ENCODE measurements at regions of chr2 and their contacts with region 1.

Region 1: GRCh38 chr2:227766373-227766883 is 20.7 kb downstream of the SCYGR8 start:
- DNase-seq: peak; percentile 78 to 82
- H3K4me3 ChIP-seq: no peak overlapping the region
- H3K4me3 Mint-ChIP-seq: no peak overlapping the region
- H3K27ac Mint-ChIP-seq: peak overlapping the region; percentile 3
- H3K4me1 ChIP-seq: peaks cover 25% of the 10 kb centered on the region
- H3K4me1 Mint-ChIP-seq: peaks cover 23% of the 10 kb centered on the region
- H3K27me3 ChIP-seq: no peaks in the 10 kb centered on the region
- H3K27me3 Mint-ChIP-seq: no peaks in the 10 kb centered on the region
- CTCF ChIP-seq: peak; percentile 76 to 81

Region 2: DNA sequence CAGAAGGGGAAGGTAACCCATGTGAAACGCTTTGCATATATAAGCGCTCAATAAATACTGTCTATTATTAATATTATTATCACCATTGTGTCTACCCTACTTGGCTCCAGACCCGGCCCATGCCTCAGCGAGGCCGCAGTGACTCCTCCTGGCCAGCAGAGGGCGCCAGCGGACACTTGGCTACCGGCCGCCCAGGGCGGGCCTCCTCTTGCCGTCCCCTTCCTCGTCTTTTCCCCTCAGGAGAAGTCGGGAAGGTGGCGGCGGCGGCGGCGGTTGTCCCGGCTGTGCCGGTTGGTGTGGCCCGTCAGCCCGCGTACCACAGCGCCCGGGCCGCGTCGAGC is 294.5 kb before region 1 on chr2 and contains the start of gene AGFG1:
- CTCF ChIA-PET with region 1: interaction called, 3 read pairs
- POLR2A ChIA-PET with region 1: no interaction called
- intact Hi-C with region 1: loop called (anchors 5 kb)
- DNase-seq: peak; percentile 80 to 89
- H3K4me3 ChIP-seq: peak within 1 kb of the TSS; percentile 79
- H3K4me3 Mint-ChIP-seq: peak within 1 kb of the TSS; percentile 93
- H3K27ac Mint-ChIP-seq: peak within 1 kb of the TSS; percentile 22
- H3K4me1 ChIP-seq: peaks cover 29% of the 10 kb centered on the region
- H3K4me1 Mint-ChIP-seq: peaks cover 12% of the 10 kb centered on the region
- H3K27me3 ChIP-seq: no peaks in the 10 kb centered on the region
- H3K27me3 Mint-ChIP-seq: no peaks in the 10 kb centered on the region
- CTCF ChIP-seq: peak; percentile 88 to 89
- total RNA-seq, gene AGFG1: 73.1 and 73.2 TPM in 2 replicates

Region 3: DNA sequence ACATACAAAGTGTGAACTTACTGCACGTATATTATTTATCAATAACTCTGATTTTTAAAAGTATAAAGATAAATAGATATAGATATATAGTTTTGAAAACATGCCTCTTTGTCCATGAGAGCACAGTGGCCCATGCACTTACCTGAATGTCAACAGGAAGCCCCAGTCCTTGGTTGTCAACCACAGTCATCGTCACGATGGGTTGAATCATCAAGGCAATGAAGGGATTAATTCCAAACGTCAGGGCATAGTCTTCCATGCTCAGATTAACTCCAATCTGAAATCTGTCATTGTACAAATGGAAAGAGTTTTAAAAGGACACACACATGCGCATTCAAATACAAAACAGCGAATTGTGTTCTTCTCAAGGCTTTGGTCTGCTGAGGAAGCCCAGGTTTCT is 133.6 kb before region 1 on chr2:
- CTCF ChIA-PET with region 1: no interaction called
- POLR2A ChIA-PET with region 1: no interaction called
- intact Hi-C with region 1: no loop called
- DNase-seq: no peak
- H3K4me3 ChIP-seq: no peak overlapping the region
- H3K4me3 Mint-ChIP-seq: no peak overlapping the region
- H3K27ac Mint-ChIP-seq: no peak overlapping the region
- H3K4me1 ChIP-seq: peaks cover 5% of the 10 kb centered on the region
- H3K4me1 Mint-ChIP-seq: no peaks in the 10 kb centered on the region
- H3K27me3 ChIP-seq: no peaks in the 10 kb centered on the region
- H3K27me3 Mint-ChIP-seq: no peaks in the 10 kb centered on the region
- CTCF ChIP-seq: no peak

Region 4: DNA sequence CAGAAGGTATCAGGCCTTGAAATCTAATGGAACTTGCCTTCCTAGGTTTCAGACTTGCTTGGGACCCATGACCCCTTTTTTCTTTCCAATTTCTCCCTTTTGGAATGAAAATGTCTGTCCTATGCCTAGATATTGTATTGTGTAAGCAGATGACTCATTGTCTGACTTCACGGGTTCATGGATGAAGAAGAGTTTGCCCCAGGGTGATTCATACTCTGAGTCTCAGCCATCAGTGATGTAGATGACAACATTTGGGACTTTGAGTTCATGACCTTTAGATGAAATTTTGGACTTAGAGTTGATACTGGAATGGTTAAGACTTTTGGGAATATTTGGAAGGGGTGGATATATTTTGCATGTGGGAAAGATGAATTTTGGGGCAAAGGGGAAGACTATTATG is 111.0 kb before region 1 on chr2:
- CTCF ChIA-PET with region 1: interaction called, 48 read pairs
- POLR2A ChIA-PET with region 1: interaction called, 6 read pairs
- intact Hi-C with region 1: loop called (anchors 1 kb)
- DNase-seq: no peak
- H3K4me3 ChIP-seq: no peak overlapping the region
- H3K4me3 Mint-ChIP-seq: no peak overlapping the region
- H3K27ac Mint-ChIP-seq: peak overlapping the region; percentile 37
- H3K4me1 ChIP-seq: peaks cover 11% of the 10 kb centered on the region
- H3K4me1 Mint-ChIP-seq: peaks cover 12% of the 10 kb centered on the region
- H3K27me3 ChIP-seq: no peaks in the 10 kb centered on the region
- H3K27me3 Mint-ChIP-seq: no peaks in the 10 kb centered on the region
- CTCF ChIP-seq: no peak

Region 5: GRCh38 chr2:227717687-227718567 is 48.5 kb before region 1 on chr2 and contains the start of gene SLC19A3:
- CTCF ChIA-PET with region 1: interaction called, 6 read pairs
- POLR2A ChIA-PET with region 1: interaction called, 4 read pairs
- intact Hi-C with region 1: loop called (anchors 1 kb)
- DNase-seq: peak; percentile 87 to 90
- H3K4me3 ChIP-seq: peak within 1 kb of the TSS; percentile 43
- H3K4me3 Mint-ChIP-seq: peak within 1 kb of the TSS; percentile 74
- H3K27ac Mint-ChIP-seq: peak within 1 kb of the TSS; percentile 59
- H3K4me1 ChIP-seq: peaks cover 34% of the 10 kb centered on the region
- H3K4me1 Mint-ChIP-seq: peaks cover 20% of the 10 kb centered on the region
- H3K27me3 ChIP-seq: no peaks in the 10 kb centered on the region
- H3K27me3 Mint-ChIP-seq: no peaks in the 10 kb centered on the region
- CTCF ChIP-seq: no peak
- total RNA-seq, gene SLC19A3: 88.2 and 98.5 TPM in 2 replicates

Measured in Caco-2 (cell line).